CD4-positive, alpha-beta memory T cell (primary cell): ENCODE measurements at regions of chr1 and their contacts with region 1.

Region 1: DNA sequence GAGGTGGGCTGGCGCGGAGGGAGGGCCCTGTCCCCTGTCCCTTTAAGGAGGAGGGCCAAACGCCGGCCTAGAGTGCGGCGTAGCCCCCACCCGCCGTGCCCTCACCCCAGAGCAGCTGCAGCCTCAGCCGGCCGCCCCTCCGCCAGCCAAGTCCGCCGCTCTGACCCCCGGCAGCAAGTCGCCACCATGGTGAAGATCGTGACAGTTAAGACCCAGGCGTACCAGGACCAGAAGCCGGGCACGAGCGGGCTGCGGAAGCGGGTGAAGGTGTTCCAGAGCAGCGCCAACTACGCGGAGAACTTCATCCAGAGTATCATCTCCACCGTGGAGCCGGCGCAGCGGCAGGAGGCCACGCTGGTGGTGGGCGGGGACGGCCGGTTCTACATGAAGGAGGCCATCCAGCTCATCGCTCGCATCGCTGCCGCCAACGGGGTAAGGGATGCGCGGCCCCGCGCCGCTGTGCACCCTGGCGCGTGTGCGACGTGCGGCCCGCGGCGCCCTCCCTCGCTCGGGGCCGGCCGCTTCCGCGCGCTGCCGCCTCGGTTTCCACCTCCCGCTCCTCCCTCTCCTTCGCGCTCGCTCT is at the start of gene PGM1:
- DNase-seq: peak; percentile 78 to 83 (median 82)
- H3K4me3 ChIP-seq: peak within 1 kb of the TSS; percentile 48 to 94
- H3K4me3 Mint-ChIP-seq: peak within 1 kb of the TSS; percentile 95 to 99 (median 98)
- H3K27ac ChIP-seq: peak within 1 kb of the TSS; percentile 73
- H3K27ac Mint-ChIP-seq: peak within 1 kb of the TSS; percentile 96 to 100 (median 99)
- H3K4me1 ChIP-seq: peaks cover 10% of the 10 kb centered on the region
- H3K4me1 Mint-ChIP-seq: peaks cover 22 to 36% (median 28%) of the 10 kb centered on the region in 4 donors
- H3K27me3 ChIP-seq: no peaks in the 10 kb centered on the region
- H3K27me3 Mint-ChIP-seq: no peaks in the 10 kb centered on the region
- total RNA-seq, gene PGM1: 18.8 to 20.7 TPM

Region 2: GRCh38 chr1:62687903-62688686 is 905.3 kb before region 1 on chr1 and contains the start of gene DOCK7:
- CTCF ChIA-PET with region 1: no interaction called
- POLR2A ChIA-PET with region 1: no interaction called
- intact Hi-C with region 1: loop called (anchors 5 kb)
- DNase-seq: peak; percentile 50 to 61 (median 57)
- H3K4me3 ChIP-seq: peak within 1 kb of the TSS; percentile 50 to 79
- H3K4me3 Mint-ChIP-seq: peak within 1 kb of the TSS; percentile 95 to 98 (median 96)
- H3K27ac ChIP-seq: peak within 1 kb of the TSS; percentile 38
- H3K27ac Mint-ChIP-seq: peak within 1 kb of the TSS; percentile 90 to 96 (median 94)
- H3K4me1 ChIP-seq: peaks cover 6% of the 10 kb centered on the region
- H3K4me1 Mint-ChIP-seq: peaks cover 20 to 37% (median 27%) of the 10 kb centered on the region in 4 donors
- H3K27me3 ChIP-seq: no peaks in the 10 kb centered on the region
- H3K27me3 Mint-ChIP-seq: peaks cover 0 to 2% of the 10 kb centered on the region in 2 donors
- total RNA-seq, gene DOCK7: 17.4 to 20.8 TPM

Region 3: DNA sequence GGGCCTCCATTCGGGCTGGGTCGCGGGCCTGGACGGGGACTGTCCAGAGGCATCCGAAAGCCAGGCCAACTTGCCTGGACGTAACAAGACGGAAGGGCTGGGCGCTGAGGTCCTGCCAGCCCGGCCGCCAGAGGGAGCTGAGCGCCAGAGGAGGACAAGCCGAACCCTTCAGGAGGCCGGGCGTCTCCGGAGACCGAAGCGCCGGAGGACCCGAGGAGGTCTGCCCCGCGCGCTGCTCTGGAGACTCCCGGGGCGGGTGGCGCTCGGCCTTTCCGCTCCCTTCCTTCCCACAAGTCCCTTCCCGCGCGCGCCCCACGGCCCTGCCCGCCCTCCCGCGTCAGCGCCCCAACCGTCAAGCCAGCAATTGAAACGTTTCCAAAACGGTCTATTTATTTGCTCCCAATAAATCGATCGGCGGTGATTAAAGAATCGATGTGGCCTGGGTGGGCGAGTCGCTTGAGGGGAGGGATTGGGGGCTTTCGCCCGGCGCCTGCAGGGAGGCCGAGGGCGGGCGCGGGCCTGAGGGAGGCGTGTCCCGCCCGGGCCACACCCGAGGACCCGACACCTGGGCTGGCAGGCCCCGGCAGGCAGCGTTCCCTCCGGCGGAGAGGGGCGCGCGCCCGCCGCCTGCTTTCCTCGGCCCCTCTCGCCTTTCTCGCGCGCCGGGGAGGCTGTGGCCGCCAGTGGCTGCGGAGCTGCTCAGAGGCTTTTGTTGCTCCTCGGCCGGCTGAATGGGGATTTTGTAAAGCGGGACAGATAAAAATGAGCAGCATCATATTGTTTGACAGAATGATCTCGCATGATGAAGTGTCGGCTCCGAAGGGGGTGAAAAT is 276.2 kb before region 1 on chr1:
- CTCF ChIA-PET with region 1: no interaction called
- POLR2A ChIA-PET with region 1: no interaction called
- intact Hi-C with region 1: loop called (anchors 5 kb)
- DNase-seq: peak in 3 of 5 donors; percentile 25 to 40 (median 34)
- H3K4me3 ChIP-seq: peak overlapping the region in 1 of 2 donors; percentile 32
- H3K4me3 Mint-ChIP-seq: peak overlapping the region; percentile 42 to 82 (median 66)
- H3K27ac ChIP-seq: no peak overlapping the region
- H3K27ac Mint-ChIP-seq: peak overlapping the region in 2 of 7 donors; percentile 5 to 91
- H3K4me1 ChIP-seq: peaks cover 23% of the 10 kb centered on the region
- H3K4me1 Mint-ChIP-seq: peaks cover 12 to 44% (median 26%) of the 10 kb centered on the region in 4 donors
- H3K27me3 ChIP-seq: peaks cover 62% of the 10 kb centered on the region
- H3K27me3 Mint-ChIP-seq: peaks cover 62 to 64% of the 10 kb centered on the region in 2 donors

Region 4: GRCh38 chr1:63506782-63507181 is 86.6 kb before region 1 on chr1:
- CTCF ChIA-PET with region 1: no interaction called
- POLR2A ChIA-PET with region 1: no interaction called
- intact Hi-C with region 1: no loop called
- DNase-seq: no peak
- H3K4me3 ChIP-seq: no peak overlapping the region
- H3K4me3 Mint-ChIP-seq: no peak overlapping the region
- H3K27ac ChIP-seq: no peak overlapping the region
- H3K27ac Mint-ChIP-seq: peak overlapping the region in 1 of 7 donors; percentile 22
- H3K4me1 ChIP-seq: no peaks in the 10 kb centered on the region
- H3K4me1 Mint-ChIP-seq: no peaks in the 10 kb centered on the region
- H3K27me3 ChIP-seq: no peaks in the 10 kb centered on the region
- H3K27me3 Mint-ChIP-seq: no peaks in the 10 kb centered on the region

Region 5: GRCh38 chr1:63522891-63523728 is 70.3 kb before region 1 on chr1 and contains the starts of genes EFCAB7 and ITGB3BP:
- CTCF ChIA-PET with region 1: no interaction called
- POLR2A ChIA-PET with region 1: interaction called, 4 read pairs
- intact Hi-C with region 1: loop called (anchors 1 kb)
- DNase-seq: peak; percentile 81 to 84 (median 81)
- H3K4me3 ChIP-seq: peak within 1 kb of the TSS; percentile 92 to 94
- H3K4me3 Mint-ChIP-seq: peak within 1 kb of the TSS; percentile 89 to 98 (median 93)
- H3K27ac ChIP-seq: peak within 1 kb of the TSS; percentile 79
- H3K27ac Mint-ChIP-seq: peak within 1 kb of the TSS; percentile 93 to 99 (median 97)
- H3K4me1 ChIP-seq: peaks cover 25% of the 10 kb centered on the region
- H3K4me1 Mint-ChIP-seq: peaks cover 7 to 50% (median 22%) of the 10 kb centered on the region in 4 donors
- H3K27me3 ChIP-seq: no peaks in the 10 kb centered on the region
- H3K27me3 Mint-ChIP-seq: no peaks in the 10 kb centered on the region
- total RNA-seq, gene EFCAB7: 9.8 to 15.1 TPM
- total RNA-seq, gene ITGB3BP: 26.4 to 27.8 TPM

Region 6: GRCh38 chr1:63547621-63548294 is 45.6 kb before region 1 on chr1:
- CTCF ChIA-PET with region 1: no interaction called
- POLR2A ChIA-PET with region 1: no interaction called
- intact Hi-C with region 1: no loop called
- DNase-seq: no peak
- H3K4me3 ChIP-seq: no peak overlapping the region
- H3K4me3 Mint-ChIP-seq: no peak overlapping the region
- H3K27ac ChIP-seq: no peak overlapping the region
- H3K27ac Mint-ChIP-seq: peak overlapping the region in 3 of 7 donors; percentile 25 to 58 (median 37)
- H3K4me1 ChIP-seq: no peaks in the 10 kb centered on the region
- H3K4me1 Mint-ChIP-seq: no peaks in the 10 kb centered on the region
- H3K27me3 ChIP-seq: no peaks in the 10 kb centered on the region
- H3K27me3 Mint-ChIP-seq: no peaks in the 10 kb centered on the region

Region 7: GRCh38 chr1:63651161-63651701 is 57.8 kb after region 1 on chr1:
- CTCF ChIA-PET with region 1: no interaction called
- POLR2A ChIA-PET with region 1: interaction called, 14 read pairs
- intact Hi-C with region 1: loop called (anchors 1 kb)
- DNase-seq: peak; percentile 52 to 63 (median 57)
- H3K4me3 ChIP-seq: peak overlapping the region in 1 of 2 donors; percentile 7
- H3K4me3 Mint-ChIP-seq: peak overlapping the region; percentile 16 to 91 (median 80)
- H3K27ac ChIP-seq: peak overlapping the region; percentile 31
- H3K27ac Mint-ChIP-seq: peak overlapping the region; percentile 90 to 97 (median 96)
- H3K4me1 ChIP-seq: peaks cover 39% of the 10 kb centered on the region
- H3K4me1 Mint-ChIP-seq: peaks cover 13 to 44% (median 31%) of the 10 kb centered on the region in 4 donors
- H3K27me3 ChIP-seq: no peaks in the 10 kb centered on the region
- H3K27me3 Mint-ChIP-seq: no peaks in the 10 kb centered on the region

Region 8: GRCh38 chr1:63668298-63668697 is 74.9 kb after region 1 on chr1:
- CTCF ChIA-PET with region 1: no interaction called
- POLR2A ChIA-PET with region 1: no interaction called
- intact Hi-C with region 1: no loop called
- DNase-seq: no peak
- H3K4me3 ChIP-seq: no peak overlapping the region
- H3K4me3 Mint-ChIP-seq: no peak overlapping the region
- H3K27ac ChIP-seq: no peak overlapping the region
- H3K27ac Mint-ChIP-seq: no peak overlapping the region
- H3K4me1 ChIP-seq: no peaks in the 10 kb centered on the region
- H3K4me1 Mint-ChIP-seq: no peaks in the 10 kb centered on the region
- H3K27me3 ChIP-seq: no peaks in the 10 kb centered on the region
- H3K27me3 Mint-ChIP-seq: no peaks in the 10 kb centered on the region